ENCODE measurements at regions of chr1 and their contacts with region 1.

Region 1: GRCh38 chr1:220370031-220370700 is 97.9 kb upstream of the RAB3GAP2 start:
- DNase-seq: no peak
- H3K4me3 ChIP-seq: no peak overlapping the region
- H3K27ac ChIP-seq: peak overlapping the region in 1 of 2 donors; percentile 58
- H3K4me1 ChIP-seq: peaks cover 0 to 5% of the 10 kb centered on the region in 2 donors
- H3K27me3 ChIP-seq: no peaks in the 10 kb centered on the region
- CTCF ChIP-seq: no peak
- POLR2A ChIP-seq: no peak

Region 2: GRCh38 chr1:220380885-220381284 is 10.7 kb after region 1 on chr1:
- intact Hi-C with region 1: no loop called
- DNase-seq: no peak
- H3K4me3 ChIP-seq: no peak overlapping the region
- H3K27ac ChIP-seq: no peak overlapping the region
- H3K4me1 ChIP-seq: no peaks in the 10 kb centered on the region
- H3K27me3 ChIP-seq: no peaks in the 10 kb centered on the region
- CTCF ChIP-seq: no peak
- POLR2A ChIP-seq: no peak

Region 3: DNA sequence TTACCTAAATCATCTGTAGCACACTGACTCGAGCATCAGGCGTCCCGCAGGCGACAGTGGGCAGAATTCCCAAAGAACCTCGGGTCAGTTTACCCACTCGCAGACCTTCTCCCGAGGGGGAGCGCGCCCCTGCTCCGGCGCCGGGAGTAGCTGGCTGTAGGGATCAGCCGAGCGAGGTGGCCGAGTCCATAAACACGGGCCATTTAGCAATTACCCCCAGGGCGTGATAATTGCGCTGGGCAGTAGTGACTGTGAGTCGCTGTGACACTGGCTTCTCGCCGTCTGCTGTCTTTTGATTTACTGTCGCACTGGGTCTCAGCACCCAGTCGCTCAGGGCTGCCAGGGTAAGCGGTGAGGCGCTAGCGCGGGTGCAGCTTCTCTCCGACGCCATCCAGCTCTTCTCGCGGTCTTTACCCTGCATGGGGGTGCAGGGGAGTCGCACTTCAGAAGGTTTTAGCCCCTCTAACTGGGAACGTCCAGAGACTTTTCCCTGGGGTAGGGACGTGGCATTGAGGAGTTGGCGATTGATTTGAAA is 525.3 kb after region 1 on chr1:
- intact Hi-C with region 1: loop called (anchors 5 kb)
- DNase-seq: no peak
- H3K4me3 ChIP-seq: no peak overlapping the region
- H3K27ac ChIP-seq: no peak overlapping the region
- H3K4me1 ChIP-seq: peaks cover 0 to 5% of the 10 kb centered on the region in 2 donors
- H3K27me3 ChIP-seq: peaks cover 0 to 53% of the 10 kb centered on the region in 2 donors
- CTCF ChIP-seq: no peak
- POLR2A ChIP-seq: no peak

Region 4: GRCh38 chr1:221212926-221213325 is 842.8 kb after region 1 on chr1:
- intact Hi-C with region 1: no loop called
- DNase-seq: no peak
- H3K4me3 ChIP-seq: no peak overlapping the region
- H3K27ac ChIP-seq: no peak overlapping the region
- H3K4me1 ChIP-seq: no peaks in the 10 kb centered on the region
- H3K27me3 ChIP-seq: no peaks in the 10 kb centered on the region
- CTCF ChIP-seq: no peak
- POLR2A ChIP-seq: no peak